ENCODE measurements at regions of chr1 and their contacts with region 1.

Region 1: DNA sequence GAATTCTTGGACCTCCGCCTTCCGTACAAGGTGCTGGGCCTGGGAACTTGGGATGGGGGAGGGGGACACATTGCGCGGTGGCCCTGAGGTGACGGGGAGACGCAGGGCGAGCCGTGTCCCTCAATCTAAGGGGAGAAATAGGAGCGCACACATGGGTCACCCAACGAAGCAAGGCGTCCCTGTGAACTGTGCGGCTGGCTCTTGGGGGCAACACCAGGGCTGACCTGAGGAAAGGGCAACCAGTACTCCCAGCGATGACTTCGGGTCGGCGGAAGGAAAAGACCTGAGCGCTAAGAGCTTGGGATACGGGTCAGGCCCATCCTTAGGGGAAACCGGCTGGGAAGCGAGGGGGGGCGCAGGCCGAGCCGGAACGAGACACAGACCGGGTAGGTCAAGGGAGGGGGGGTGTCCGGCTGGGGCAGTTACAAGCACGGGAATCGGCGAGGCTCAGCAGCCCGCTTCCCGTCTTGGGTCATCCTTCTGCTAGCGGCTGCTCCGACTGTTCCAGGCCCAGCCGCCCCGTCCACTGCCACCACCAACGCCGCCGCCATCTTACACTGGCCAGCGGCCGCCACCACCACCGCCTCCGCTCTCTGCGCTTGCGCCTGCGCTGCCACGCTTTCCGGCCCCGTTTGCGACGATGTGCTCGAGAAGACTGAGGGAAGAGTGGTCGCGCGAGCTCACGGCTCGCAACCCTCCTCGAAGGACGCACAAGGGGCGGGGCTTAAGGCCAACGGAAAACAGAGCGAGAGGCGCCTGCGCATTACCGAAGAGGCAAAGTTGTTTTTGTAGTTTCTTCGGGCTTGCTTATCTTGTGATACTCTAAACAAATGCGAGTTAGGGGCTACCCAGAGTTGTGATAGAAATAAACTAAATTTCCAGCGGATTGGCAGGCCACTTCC is at the start of gene DCAF8:
- DNase-seq: peak; percentile 99
- H3K4me3 Mint-ChIP-seq: peak within 1 kb of the TSS; percentile 98
- H3K27ac Mint-ChIP-seq: peak within 1 kb of the TSS; percentile 100
- H3K4me1 Mint-ChIP-seq: peaks cover 49% of the 10 kb centered on the region
- H3K27me3 Mint-ChIP-seq: no peaks in the 10 kb centered on the region
- total RNA-seq, gene DCAF8: 218 to 226 TPM

Region 2: DNA sequence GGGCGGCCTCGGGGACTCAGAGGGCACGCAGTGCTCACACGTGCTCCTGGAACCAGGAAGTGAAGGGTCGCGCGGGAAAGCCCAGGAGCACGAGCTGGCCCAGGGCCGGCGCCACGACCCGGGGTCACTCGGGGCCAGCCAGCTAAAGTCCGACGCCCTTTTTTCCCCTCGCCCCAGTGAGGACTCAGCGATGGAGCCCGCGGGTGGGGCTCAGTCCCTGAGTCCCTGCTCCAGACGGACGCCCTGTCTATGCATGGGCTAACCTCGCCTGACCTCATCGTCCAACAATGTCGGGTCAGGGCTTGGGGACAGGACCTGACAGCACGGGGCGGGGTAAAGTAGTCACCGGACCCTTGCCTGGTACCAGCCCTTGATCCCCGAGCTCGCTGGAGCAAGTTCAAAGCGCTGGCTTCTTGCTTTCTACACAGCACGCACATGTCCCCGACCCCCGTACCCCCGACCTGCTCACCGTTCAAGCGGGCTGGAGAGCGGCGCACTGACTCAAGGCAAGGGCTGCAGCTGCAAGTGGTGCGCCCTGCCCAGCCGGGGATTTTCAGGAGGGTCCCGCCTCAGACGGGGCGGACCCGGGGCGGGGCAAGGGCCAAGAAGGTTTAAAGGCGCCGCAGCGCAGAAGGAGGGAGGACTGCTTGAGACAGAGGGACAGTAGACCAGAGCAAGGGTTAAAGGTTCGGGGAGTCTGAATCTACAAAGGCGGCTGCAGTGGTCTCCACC is 337.0 kb before region 1 on chr1 and contains the start of gene TAGLN2:
- CTCF ChIA-PET with region 1: no interaction called
- intact Hi-C with region 1: loop called (anchors 1 kb)
- DNase-seq: peak; percentile 89
- H3K4me3 Mint-ChIP-seq: peak within 1 kb of the TSS; percentile 91
- H3K27ac Mint-ChIP-seq: peak within 1 kb of the TSS; percentile 93
- H3K4me1 Mint-ChIP-seq: peaks cover 42% of the 10 kb centered on the region
- H3K27me3 Mint-ChIP-seq: no peaks in the 10 kb centered on the region
- total RNA-seq, gene TAGLN2: 453 to 454 TPM

Region 3: DNA sequence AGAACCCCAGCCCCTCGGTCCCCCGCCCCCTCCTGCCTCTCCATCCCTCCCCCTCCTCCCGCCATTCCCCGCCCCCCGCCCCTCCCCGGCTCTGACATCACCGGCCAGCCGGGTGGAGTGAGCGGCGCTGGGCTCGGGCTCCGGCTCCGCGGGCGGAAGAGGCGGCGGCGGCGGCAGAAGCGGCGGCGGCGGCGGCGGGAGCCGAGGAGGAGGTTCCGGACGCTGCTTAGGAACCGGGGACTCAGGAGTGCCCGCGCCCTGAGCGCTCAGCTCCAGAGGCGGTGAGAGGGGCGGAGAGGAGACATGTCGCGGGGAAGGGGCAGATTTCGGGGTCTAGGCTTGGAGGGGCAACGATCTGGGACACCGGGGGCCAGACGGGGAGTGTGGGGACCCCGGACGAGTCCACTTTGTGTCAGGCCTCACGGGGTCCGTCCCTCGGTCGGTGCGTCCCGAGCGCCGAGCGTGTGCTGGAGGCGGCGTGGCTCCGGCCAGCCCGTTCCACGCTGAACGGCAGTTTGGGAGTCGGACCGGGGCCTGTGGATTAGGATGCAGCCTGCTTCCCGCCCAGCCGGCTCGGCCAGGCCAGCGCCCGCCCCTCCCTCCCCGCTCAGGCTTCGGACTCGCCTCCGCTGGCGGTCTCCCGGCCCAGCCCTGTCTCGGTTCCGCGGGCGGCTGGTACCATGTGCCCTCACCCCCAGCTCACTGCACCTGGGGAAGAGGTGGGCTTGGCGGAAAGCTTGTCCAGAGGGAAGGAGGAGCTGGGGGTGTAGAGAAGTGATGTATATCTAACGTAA is 56.7 kb before region 1 on chr1 and contains the start of gene PEA15:
- CTCF ChIA-PET with region 1: interaction called, 3 read pairs
- intact Hi-C with region 1: loop called (anchors 1 kb)
- DNase-seq: peak; percentile 79
- H3K4me3 Mint-ChIP-seq: peak within 1 kb of the TSS; percentile 85
- H3K27ac Mint-ChIP-seq: peak within 1 kb of the TSS; percentile 87
- H3K4me1 Mint-ChIP-seq: peaks cover 46% of the 10 kb centered on the region
- H3K27me3 Mint-ChIP-seq: no peaks in the 10 kb centered on the region
- total RNA-seq, gene PEA15: 34.3 to 42.0 TPM

Region 4: GRCh38 chr1:160284782-160285344 is 22.7 kb after region 1 on chr1 and contains the start of gene PEX19:
- CTCF ChIA-PET with region 1: interaction called, 3 read pairs
- intact Hi-C with region 1: loop called (anchors 1 kb)
- DNase-seq: peak; percentile 97
- H3K4me3 Mint-ChIP-seq: peak within 1 kb of the TSS; percentile 98
- H3K27ac Mint-ChIP-seq: peak within 1 kb of the TSS; percentile 87
- H3K4me1 Mint-ChIP-seq: peaks cover 18% of the 10 kb centered on the region
- H3K27me3 Mint-ChIP-seq: no peaks in the 10 kb centered on the region
- total RNA-seq, gene PEX19: 58.3 to 65.4 TPM

Region 5: DNA sequence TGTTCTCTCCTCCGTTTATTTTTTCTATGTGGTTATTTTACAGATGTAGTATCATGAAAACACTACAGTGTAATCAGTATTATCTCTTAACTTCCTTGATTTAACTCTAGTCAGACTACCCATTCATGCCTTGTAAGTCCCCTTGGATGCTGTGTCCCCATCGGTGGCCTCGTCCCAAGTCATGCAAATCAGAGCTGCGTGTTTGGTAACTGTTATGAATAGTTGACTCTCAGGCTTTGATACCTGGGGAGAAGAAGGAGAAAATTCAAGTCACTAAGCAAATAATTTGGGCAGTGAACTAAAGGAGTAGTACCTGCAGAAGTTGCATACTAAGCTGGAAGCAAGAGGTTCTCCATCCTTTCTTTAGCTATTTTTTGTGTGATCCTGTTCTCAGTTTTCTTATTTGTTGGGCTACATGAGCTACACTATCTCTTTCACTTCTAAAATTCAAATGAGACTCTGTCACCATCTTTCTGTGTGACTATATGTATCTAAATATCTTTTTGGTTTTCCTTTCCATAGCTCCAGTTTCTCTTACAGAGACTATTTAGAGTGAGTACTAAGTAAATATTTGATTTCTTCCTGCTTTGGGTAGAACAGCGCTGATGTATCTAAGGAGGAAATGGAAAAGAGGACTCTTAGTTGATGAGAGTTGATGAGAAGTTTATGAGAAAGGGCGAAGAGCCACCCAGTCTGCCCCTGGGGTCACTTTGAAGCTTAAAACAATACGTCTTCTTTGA is 189.1 kb after region 1 on chr1:
- CTCF ChIA-PET with region 1: no interaction called
- intact Hi-C with region 1: loop called (anchors 2 kb)
- DNase-seq: no peak
- H3K4me3 Mint-ChIP-seq: peak overlapping the region; percentile 56
- H3K27ac Mint-ChIP-seq: peak overlapping the region; percentile 93
- H3K4me1 Mint-ChIP-seq: peaks cover 76% of the 10 kb centered on the region
- H3K27me3 Mint-ChIP-seq: no peaks in the 10 kb centered on the region

Region 6: GRCh38 chr1:160519642-160520435 is 257.7 kb after region 1 on chr1:
- CTCF ChIA-PET with region 1: no interaction called
- intact Hi-C with region 1: loop called (anchors 5 kb)
- DNase-seq: peak; percentile 60
- H3K4me3 Mint-ChIP-seq: peak overlapping the region; percentile 85
- H3K27ac Mint-ChIP-seq: peak overlapping the region; percentile 97
- H3K4me1 Mint-ChIP-seq: peaks cover 71% of the 10 kb centered on the region
- H3K27me3 Mint-ChIP-seq: no peaks in the 10 kb centered on the region

Region 7: DNA sequence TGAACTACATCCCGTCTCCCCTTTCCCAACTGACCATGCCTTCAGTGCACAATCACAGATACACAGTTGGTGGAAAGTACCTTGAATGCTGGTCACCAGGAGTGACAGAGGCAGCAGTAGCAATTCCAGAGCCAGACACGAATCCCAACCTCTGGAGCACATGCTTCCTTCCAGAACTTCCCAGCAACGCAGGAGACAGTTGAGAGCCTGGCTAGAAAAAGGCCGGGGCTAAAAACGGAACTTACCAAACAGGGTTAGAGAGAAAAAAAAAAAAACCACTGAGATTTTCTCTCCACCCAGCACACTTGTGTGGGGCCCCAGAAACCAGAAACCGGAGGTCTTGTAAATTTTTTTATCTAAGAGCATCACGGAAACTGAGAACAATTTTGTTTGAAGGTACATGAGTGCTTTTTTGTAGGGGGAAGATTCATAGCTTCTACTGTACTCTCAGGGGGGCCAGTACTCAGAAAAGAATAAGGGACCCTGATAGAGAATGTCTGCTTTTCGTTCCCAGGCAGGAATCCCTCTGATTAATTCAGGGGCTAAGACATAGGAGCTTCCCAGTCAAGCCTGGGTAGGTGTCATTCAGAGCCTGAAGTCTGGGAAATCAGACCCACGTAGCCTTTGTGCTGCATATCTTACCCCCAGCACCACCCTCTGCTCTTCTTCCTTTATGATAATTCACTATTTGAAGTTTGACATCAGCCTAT is 449.6 kb after region 1 on chr1 and contains the start of gene CD48:
- CTCF ChIA-PET with region 1: no interaction called
- intact Hi-C with region 1: loop called (anchors 10 kb)
- DNase-seq: peak; percentile 70
- H3K4me3 Mint-ChIP-seq: no peak within 1 kb of the TSS
- H3K27ac Mint-ChIP-seq: no peak within 1 kb of the TSS
- H3K4me1 Mint-ChIP-seq: peaks cover 28% of the 10 kb centered on the region
- H3K27me3 Mint-ChIP-seq: no peaks in the 10 kb centered on the region
- total RNA-seq, gene CD48: 338 to 340 TPM